ENCODE measurements at regions of chr2 and their contacts with region 1.

Region 1: DNA sequence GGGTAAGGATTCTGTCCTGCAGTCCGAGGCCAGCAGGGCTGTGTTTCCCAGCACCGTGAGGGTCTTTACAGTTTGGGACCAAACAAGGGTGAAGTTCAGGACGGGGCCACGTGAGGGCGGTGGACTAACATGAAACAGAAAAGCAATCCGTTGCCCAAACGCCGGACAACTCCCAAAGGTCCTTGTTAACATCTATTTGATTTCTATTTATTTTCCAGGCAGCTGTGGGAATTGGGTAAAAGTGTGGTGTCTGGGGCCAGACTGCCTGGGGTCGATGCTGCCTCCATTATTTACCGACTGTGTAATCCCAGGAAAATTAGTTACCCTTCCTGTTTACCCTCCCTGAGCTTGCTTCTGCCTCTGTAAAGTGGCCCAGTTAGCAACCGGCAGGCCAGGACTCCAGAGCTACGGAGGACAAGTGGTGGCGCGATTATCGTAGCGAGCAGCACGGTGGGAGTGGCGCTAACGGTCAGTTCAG is 66.3 kb upstream of the TCF7L1 start:
- DNase-seq: peak; percentile 75
- H3K4me3 ChIP-seq: peak overlapping the region; percentile 7 to 24; a peak in 3 of 4 replicates
- H3K27ac ChIP-seq: no peak overlapping the region
- H3K4me1 ChIP-seq: peaks cover 0 to 16% of the 10 kb centered on the region in 2 experiments; a peak in 1 of 4 replicates
- H3K27me3 ChIP-seq: no peaks in the 10 kb centered on the region
- CTCF ChIP-seq: peak; percentile 91
- EP300 ChIP-seq: peak in 1 of 2 experiments; percentile 25; a peak in 1 of 4 replicates
- RAD21 ChIP-seq: peak; percentile 93

Region 2: DNA sequence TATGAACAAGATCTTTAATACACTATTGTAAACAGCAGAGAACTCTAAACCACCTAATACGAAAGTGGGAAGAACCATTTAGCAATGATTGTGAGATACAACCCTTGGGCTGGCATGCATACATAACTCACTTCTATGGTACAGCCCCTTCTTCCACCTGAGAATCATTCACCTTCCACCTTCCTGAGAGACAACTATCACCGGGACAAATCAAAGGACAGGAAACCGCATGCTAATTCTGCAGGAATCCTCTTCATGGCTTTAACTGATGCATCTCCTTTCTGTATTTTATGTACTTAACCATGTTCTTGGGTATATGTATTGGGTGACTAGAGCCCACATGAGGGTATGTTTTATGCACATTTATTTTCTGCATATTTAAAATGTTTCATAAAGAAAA is 309.3 kb before region 1 on chr2:
- CTCF ChIA-PET with region 1: no interaction called
- POLR2A ChIA-PET with region 1: no interaction called
- DNase-seq: no peak
- H3K4me3 ChIP-seq: no peak overlapping the region
- H3K27ac ChIP-seq: no peak overlapping the region
- H3K4me1 ChIP-seq: no peaks in the 10 kb centered on the region
- H3K27me3 ChIP-seq: no peaks in the 10 kb centered on the region
- CTCF ChIP-seq: no peak
- EP300 ChIP-seq: no peak
- RAD21 ChIP-seq: no peak

Region 3: GRCh38 chr2:85011747-85012146 is 55.2 kb before region 1 on chr2:
- CTCF ChIA-PET with region 1: interaction called, 11 read pairs
- POLR2A ChIA-PET with region 1: no interaction called
- DNase-seq: peak; percentile 25
- H3K4me3 ChIP-seq: no peak overlapping the region
- H3K27ac ChIP-seq: no peak overlapping the region
- H3K4me1 ChIP-seq: peaks cover 0 to 32% of the 10 kb centered on the region in 2 experiments; a peak in 3 of 4 replicates
- H3K27me3 ChIP-seq: no peaks in the 10 kb centered on the region
- CTCF ChIP-seq: peak; percentile 41
- EP300 ChIP-seq: no peak
- RAD21 ChIP-seq: no peak

Region 4: DNA sequence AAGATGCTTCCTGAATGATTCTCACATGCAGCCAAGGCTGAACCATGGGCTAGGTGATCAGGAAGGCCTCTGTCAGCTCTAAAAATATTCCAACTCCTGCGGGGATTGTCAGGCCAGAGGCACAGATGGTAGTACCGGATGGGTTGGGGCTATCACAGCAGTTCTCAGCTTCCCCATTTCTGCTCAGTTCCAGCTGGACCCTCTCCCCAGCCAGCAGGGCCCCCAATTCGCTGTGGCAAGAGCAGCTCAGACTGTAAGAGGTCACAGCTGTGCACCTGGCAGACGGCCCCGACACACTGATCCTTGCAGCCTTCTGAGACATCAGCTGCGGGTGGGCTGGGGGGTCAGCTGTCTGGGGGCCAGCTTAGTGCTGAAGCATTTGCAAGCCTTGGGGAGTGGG is 22.7 kb after region 1 on chr2:
- CTCF ChIA-PET with region 1: interaction called, 16 read pairs
- POLR2A ChIA-PET with region 1: no interaction called
- DNase-seq: no peak
- H3K4me3 ChIP-seq: no peak overlapping the region
- H3K27ac ChIP-seq: no peak overlapping the region
- H3K4me1 ChIP-seq: no peaks in the 10 kb centered on the region
- H3K27me3 ChIP-seq: peaks cover 31% of the 10 kb centered on the region; the same call in 1 of the 2 replicates
- CTCF ChIP-seq: no peak
- EP300 ChIP-seq: no peak
- RAD21 ChIP-seq: no peak

Region 5: DNA sequence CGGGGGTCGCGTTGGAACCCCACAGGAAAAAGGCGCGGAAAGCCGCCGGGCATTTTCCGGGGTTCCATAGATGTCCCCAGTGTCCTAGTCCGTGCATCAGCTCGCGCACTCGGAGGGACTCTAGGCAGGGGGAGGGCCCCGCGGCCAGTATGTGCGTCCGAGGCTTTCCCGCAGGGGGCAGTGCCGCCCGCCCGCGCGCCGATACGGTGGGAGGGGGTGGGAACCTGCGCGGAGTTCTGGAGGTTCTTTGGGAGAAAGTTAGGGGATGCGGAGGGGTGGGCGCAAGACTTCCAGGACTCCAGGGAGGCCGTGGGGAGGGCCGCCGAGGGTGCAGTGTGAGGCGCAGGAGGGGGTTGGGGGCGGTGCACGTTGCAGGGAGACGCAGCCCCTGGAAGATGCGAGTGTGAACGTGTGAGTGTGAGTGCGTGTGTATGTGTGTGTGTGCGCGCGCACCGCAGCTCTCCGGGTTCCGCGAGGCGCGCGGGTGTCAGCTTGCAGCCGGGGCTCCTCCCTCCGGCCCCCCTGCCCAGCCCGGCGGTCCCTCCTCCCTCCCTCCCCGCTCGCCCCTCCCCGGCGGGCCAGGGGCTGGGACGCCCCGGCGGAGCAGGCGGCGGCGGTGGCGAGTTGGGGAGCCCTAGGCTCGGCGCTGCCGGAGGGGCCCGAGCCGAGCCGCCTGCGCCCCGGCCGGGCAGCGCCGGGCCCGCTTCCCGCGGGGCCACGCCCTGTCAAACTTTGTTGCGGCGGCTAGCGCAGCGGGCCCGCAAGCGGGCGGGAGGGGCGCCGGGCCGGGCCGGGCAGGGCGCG is 66.1 kb after region 1 on chr2 and contains the start of gene TCF7L1:
- CTCF ChIA-PET with region 1: interaction called, 46 read pairs
- POLR2A ChIA-PET with region 1: no interaction called
- DNase-seq: peak; percentile 93
- H3K4me3 ChIP-seq: peak within 1 kb of the TSS; percentile 66 to 90
- H3K27ac ChIP-seq: no peak within 1 kb of the TSS; a peak in 1 of 4 replicates
- H3K4me1 ChIP-seq: peaks cover 0 to 18% of the 10 kb centered on the region in 2 experiments; a peak in 2 of 4 replicates
- H3K27me3 ChIP-seq: no peaks in the 10 kb centered on the region
- CTCF ChIP-seq: peak; percentile 88
- EP300 ChIP-seq: no peak
- RAD21 ChIP-seq: peak; percentile 75
- polyA plus RNA-seq, gene TCF7L1: 1.6 and 3.7 TPM in 2 replicates

Region 6: DNA sequence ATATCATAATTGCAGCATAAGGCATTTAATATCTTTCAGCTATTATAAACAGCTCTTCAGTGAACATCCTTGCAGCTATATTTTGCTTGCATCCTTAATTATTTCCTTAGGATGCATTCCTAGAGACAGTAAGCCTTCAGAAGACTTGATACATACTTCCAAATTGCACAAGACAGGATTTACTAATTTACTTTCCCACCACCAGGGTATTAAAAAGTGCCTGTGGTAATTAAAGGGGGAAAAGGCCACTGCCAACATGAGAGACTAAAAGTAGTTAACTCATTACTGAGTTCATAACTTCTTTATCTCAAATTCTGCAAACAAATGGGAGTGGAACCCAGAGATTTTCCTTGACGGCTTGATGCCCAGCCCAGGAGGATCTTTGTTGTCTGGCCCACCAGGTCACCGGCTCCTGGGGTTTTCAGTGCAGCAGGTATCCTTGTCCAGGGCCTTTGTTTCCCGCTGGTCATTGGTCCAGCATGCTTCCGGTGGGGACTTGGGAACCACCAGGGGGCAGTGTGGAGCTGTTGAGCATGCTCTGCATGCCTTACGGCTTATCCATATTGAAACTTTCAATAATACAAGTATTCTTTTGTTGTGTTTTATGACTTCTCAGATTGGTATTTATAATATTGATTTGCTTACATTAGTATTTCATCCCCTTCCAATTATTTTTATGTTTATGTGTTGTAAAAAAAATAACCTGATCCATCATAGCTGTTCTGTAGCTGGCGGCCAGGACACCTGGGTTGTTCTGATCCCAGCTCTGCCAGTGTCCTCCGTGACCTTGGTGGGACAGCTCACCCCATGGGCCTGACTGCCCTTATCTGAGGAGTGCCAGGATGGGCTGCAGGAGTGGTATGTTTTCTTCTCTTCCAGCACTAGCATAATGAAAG is 199.5 kb after region 1 on chr2:
- CTCF ChIA-PET with region 1: interaction called, 18 read pairs
- POLR2A ChIA-PET with region 1: no interaction called
- DNase-seq: peak; percentile 72
- H3K4me3 ChIP-seq: peak overlapping the region in 1 of 2 experiments; percentile 39; a peak in 1 of 4 replicates
- H3K27ac ChIP-seq: no peak overlapping the region
- H3K4me1 ChIP-seq: peaks cover 9 to 22% of the 10 kb centered on the region in 2 experiments; a peak in 2 of 4 replicates
- H3K27me3 ChIP-seq: no peaks in the 10 kb centered on the region
- CTCF ChIP-seq: peak; percentile 95
- EP300 ChIP-seq: no peak
- RAD21 ChIP-seq: peak; percentile 70

Region 7: DNA sequence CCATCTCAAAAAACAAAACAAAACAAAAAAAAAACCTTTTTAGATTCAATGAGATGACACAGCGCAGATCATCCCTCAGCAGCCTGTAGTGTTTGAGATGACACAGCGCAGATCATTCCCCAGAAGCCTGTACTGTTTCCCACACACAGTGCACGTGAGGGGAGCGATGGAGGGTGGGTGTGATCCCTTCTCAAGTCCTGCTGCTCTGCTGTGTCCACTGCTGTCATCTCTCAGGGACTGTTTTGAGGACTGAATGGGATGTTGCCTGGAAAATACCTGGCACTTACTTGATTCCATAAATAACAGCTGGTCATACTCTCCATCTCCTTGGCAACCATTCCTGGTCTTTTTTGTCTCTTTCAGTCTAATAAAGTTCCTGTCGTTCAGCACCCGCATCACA is 235.2 kb after region 1 on chr2:
- CTCF ChIA-PET with region 1: interaction called, 230 read pairs
- POLR2A ChIA-PET with region 1: no interaction called
- DNase-seq: no peak
- H3K4me3 ChIP-seq: no peak overlapping the region
- H3K27ac ChIP-seq: no peak overlapping the region
- H3K4me1 ChIP-seq: peaks cover 0 to 2% of the 10 kb centered on the region in 2 experiments; a peak in 2 of 4 replicates
- H3K27me3 ChIP-seq: no peaks in the 10 kb centered on the region
- CTCF ChIP-seq: no peak
- EP300 ChIP-seq: no peak
- RAD21 ChIP-seq: no peak